ENCODE measurements at regions of chr2 and their contacts with region 1.

Region 1: GRCh38 chr2:241595600-241596145 is 37.1 kb downstream of the BOK start:
- DNase-seq: no peak
- H3K4me3 ChIP-seq: no peak overlapping the region
- H3K27ac ChIP-seq: no peak overlapping the region
- H3K4me1 ChIP-seq: no peaks in the 10 kb centered on the region
- H3K27me3 ChIP-seq: no peaks in the 10 kb centered on the region
- CTCF ChIP-seq: peak; percentile 38

Region 2: GRCh38 chr2:241237047-241237446 is 358.6 kb before region 1 on chr2:
- CTCF ChIA-PET with region 1: interaction called, 11 read pairs
- POLR2A ChIA-PET with region 1: no interaction called
- intact Hi-C with region 1: no loop called
- DNase-seq: no peak
- H3K4me3 ChIP-seq: no peak overlapping the region
- H3K27ac ChIP-seq: no peak overlapping the region
- H3K4me1 ChIP-seq: no peaks in the 10 kb centered on the region
- H3K27me3 ChIP-seq: no peaks in the 10 kb centered on the region
- CTCF ChIP-seq: no peak

Region 3: GRCh38 chr2:241469746-241470145 is 125.9 kb before region 1 on chr2:
- CTCF ChIA-PET with region 1: no interaction called
- POLR2A ChIA-PET with region 1: no interaction called
- intact Hi-C with region 1: no loop called
- DNase-seq: no peak
- H3K4me3 ChIP-seq: no peak overlapping the region
- H3K27ac ChIP-seq: no peak overlapping the region
- H3K4me1 ChIP-seq: no peaks in the 10 kb centered on the region
- H3K27me3 ChIP-seq: no peaks in the 10 kb centered on the region
- CTCF ChIP-seq: no peak

Region 4: GRCh38 chr2:241720099-241720498 is 124.4 kb after region 1 on chr2:
- CTCF ChIA-PET with region 1: no interaction called
- POLR2A ChIA-PET with region 1: no interaction called
- intact Hi-C with region 1: no loop called
- DNase-seq: no peak
- H3K4me3 ChIP-seq: no peak overlapping the region
- H3K27ac ChIP-seq: no peak overlapping the region
- H3K4me1 ChIP-seq: no peaks in the 10 kb centered on the region
- H3K27me3 ChIP-seq: no peaks in the 10 kb centered on the region
- CTCF ChIP-seq: no peak